ENCODE measurements at regions of chr12 and their contacts with region 1.

Region 1: DNA sequence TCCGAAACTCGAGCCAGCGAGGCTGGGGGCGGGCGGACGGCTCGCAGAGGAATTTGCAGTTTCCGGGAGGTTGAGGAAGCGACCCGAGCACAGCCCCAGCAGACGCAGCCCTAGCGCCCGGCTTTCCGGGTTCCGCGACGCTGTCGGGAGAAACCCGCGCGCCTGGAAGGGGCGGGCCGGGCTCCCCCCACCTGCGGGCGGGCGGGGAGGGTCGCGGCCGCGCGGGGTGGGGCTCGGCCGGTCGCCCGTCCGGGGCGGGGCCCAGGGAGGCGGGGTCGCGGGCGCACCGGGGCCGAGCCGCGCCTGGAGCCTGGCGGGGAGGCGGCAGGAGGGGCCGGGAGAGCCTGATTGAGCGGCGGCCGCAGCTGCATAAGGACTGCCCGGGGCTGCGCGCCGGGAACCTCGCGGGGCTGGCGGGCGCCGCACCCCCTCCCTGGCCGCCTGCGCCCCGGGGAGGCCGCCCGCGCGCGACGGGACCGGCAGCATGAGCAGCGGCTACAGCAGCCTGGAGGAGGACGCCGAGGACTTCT is at the start of gene RASSF3:
- DNase-seq: peak; percentile 94
- H3K4me3 Mint-ChIP-seq: peak within 1 kb of the TSS; percentile 96
- H3K27ac Mint-ChIP-seq: peak within 1 kb of the TSS; percentile 93
- H3K4me1 Mint-ChIP-seq: peaks cover 36% of the 10 kb centered on the region
- H3K27me3 Mint-ChIP-seq: no peaks in the 10 kb centered on the region
- total RNA-seq, gene RASSF3: 40.8 and 43.1 TPM in 2 replicates

Region 2: DNA sequence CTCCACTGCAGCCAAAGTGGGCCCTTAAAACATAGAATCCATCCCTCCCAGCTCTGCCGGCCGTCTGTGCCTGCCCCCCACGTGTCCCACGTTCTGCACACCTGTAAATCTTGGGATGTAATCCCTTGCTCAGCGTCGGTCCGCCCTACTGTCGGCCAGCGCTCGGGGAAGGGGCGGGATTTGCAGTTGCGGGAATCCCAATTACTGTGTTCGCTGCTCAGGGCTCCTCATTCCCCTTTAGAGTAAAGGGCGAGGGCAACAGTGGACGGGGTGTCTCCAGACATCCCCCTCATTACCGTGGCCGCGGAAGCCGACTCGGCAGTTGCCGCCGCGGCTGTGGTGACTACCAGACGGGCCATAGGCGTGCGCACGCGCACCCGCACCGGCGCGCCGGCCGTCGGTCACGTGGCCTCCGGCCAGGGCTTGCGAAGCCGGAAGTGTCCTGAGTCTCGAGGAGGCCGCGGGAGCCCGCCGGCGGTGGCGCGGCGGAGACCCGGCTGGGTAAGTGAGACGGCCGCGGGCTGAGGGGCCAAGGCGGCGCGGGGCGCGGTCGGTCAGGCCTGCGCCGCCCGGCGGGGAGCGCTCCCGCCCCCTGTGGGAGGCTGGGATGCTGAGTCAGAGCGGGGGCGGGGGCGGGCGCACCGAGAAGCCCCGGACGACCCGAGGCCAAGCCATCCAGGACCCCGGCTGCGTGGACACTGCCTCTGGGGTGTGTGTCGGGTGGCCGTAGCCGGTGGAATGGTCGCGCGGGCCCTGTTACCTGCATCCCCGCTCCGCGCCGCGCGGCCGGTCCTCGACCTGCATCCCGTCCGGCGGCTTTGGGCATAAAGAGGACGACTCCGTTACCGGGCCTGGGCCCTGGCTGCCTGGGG is 158.3 kb before region 1 on chr12 and contains the start of gene TBK1:
- intact Hi-C with region 1: loop called (anchors 2 kb)
- DNase-seq: peak; percentile 93
- H3K4me3 Mint-ChIP-seq: peak within 1 kb of the TSS; percentile 98
- H3K27ac Mint-ChIP-seq: peak within 1 kb of the TSS; percentile 98
- H3K4me1 Mint-ChIP-seq: peaks cover 36% of the 10 kb centered on the region
- H3K27me3 Mint-ChIP-seq: no peaks in the 10 kb centered on the region
- total RNA-seq, gene TBK1: 32.9 and 34.6 TPM in 2 replicates

Region 3: DNA sequence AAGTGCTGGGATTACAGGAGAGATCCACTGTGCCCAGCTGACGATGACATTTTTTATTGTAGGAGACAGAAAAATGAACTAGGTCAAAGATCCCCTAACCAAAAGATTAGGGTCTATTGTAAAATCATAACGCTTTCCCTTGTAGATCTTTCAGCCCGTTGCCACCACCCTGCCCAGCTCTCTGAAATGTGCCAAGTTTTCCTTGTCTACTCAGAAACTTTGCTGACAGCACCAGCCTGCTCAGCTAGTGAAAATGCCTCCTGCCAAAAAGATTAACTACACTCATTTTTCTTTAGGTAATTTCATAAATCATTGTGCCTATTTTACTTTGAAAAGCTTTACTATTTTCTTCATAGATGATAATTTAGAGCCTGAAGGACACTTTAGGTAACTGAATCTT is 28.1 kb before region 1 on chr12:
- intact Hi-C with region 1: no loop called
- DNase-seq: no peak
- H3K4me3 Mint-ChIP-seq: no peak overlapping the region
- H3K27ac Mint-ChIP-seq: no peak overlapping the region
- H3K4me1 Mint-ChIP-seq: peaks cover 11% of the 10 kb centered on the region
- H3K27me3 Mint-ChIP-seq: peaks cover 6% of the 10 kb centered on the region

Region 4: DNA sequence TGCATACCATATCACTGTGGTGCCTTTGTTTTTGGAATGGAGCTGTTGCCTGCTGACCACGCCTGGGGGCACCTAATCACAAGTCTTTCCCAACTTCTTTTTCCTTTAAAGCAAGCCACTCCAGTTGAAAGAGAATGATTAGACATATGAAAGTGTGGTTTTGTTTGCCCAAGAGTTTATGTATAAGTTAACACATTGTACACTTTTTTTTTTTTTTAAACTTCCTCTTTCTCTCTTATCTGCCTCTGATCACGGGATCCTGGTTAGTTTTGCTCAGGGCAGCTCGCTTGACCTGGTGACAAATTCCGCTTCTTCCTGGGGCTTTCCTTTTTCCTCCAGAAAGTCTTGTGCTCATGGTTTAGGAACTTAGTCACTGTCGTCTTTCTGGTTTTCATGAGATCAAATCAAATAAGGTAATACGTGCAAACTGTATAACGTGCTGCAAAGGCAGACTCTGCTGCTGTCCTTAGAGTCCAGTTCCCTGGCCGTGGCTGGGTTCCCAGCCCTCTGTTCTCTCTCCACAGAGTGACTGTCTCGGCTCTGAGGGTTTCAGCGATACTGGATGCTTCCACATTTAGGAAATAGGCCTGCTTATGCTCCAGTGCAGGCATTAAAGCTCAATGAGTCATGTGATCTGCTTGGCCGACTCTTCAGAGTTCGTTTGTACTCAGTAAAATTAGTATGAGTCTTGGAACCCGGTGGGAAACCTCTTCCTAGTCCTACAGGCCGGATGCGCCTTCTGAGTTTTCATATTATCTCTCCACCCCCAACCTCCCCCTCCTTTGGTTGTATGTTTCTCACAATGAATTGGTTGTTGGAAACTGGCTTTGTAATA is 15.2 kb after region 1 on chr12:
- intact Hi-C with region 1: loop called (anchors 1 kb)
- DNase-seq: peak; percentile 60
- H3K4me3 Mint-ChIP-seq: peak overlapping the region; percentile 71
- H3K27ac Mint-ChIP-seq: peak overlapping the region; percentile 77
- H3K4me1 Mint-ChIP-seq: peaks cover 37% of the 10 kb centered on the region
- H3K27me3 Mint-ChIP-seq: no peaks in the 10 kb centered on the region

Region 5: DNA sequence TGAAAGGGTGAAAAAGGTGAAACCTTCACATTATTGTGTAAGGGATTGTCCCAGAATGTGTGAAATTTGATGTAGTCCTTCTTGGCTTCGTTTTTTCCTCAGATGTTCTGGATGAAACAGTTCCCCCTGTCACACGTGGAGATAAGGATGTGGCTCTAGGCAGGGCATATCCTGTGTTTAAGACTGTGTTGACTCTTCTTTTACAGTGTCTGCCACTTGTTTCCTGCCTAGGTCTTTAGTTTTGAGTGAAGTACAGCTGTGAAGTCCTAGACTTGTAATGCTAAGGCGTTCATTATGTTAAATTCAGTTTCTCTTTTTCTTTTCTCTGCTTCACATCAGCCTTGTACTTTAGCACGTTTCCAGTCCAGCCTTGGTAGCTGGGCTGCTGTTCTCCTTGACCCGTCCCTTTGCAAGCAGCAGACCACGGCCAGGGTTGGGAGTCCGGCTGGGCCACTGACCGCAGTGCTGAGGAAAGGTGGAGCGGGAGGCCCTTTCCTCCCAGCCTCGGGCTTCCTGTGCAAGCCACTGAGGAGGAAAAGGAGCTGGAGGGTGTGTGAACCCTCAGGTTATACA is 59.1 kb after region 1 on chr12:
- intact Hi-C with region 1: loop called (anchors 1 kb)
- DNase-seq: peak; percentile 88
- H3K4me3 Mint-ChIP-seq: peak overlapping the region; percentile 83
- H3K27ac Mint-ChIP-seq: peak overlapping the region; percentile 91
- H3K4me1 Mint-ChIP-seq: peaks cover 82% of the 10 kb centered on the region
- H3K27me3 Mint-ChIP-seq: no peaks in the 10 kb centered on the region

Region 6: DNA sequence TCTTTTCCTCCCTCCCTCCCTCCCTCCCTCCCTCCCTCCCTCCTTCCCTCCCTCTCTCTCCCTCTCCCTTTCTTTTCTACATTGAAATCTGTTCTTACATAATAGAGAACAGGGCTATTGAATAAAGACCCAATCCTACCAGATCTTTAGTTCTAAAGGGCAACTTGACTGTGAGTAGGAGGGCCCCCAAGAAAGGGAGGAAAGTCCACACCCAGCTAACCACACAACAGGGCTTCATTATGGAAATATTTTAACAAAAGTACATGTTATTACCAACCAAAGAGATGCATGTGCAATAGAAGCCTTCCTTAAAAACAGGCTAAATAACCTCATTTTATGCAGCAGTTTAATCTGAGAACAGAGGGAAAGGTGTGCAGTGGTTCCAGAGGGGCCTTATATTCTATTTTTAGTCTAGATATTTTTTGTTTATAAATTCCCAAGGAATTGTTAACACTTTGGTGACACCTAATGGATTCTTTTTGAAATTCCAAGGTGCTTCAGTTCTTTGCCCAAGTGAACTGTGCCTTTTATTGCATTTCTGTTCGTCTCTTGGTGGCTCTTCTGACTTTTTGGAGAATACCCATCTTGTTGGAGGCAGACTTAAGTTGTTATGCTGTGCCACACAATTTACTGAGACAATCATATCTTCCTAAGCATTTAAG is 86.0 kb after region 1 on chr12:
- intact Hi-C with region 1: loop called (anchors 1 kb)
- DNase-seq: no peak
- H3K4me3 Mint-ChIP-seq: no peak overlapping the region
- H3K27ac Mint-ChIP-seq: no peak overlapping the region
- H3K4me1 Mint-ChIP-seq: peaks cover 58% of the 10 kb centered on the region
- H3K27me3 Mint-ChIP-seq: no peaks in the 10 kb centered on the region

Region 7: GRCh38 chr12:64706306-64706705 is 96.1 kb after region 1 on chr12:
- intact Hi-C with region 1: no loop called
- DNase-seq: no peak
- H3K4me3 Mint-ChIP-seq: no peak overlapping the region
- H3K27ac Mint-ChIP-seq: no peak overlapping the region
- H3K4me1 Mint-ChIP-seq: peaks cover 4% of the 10 kb centered on the region
- H3K27me3 Mint-ChIP-seq: no peaks in the 10 kb centered on the region

Region 8: GRCh38 chr12:65169320-65170208 is 559.4 kb after region 1 on chr12 and contains the start of gene LEMD3:
- intact Hi-C with region 1: loop called (anchors 5 kb)
- DNase-seq: peak; percentile 98
- H3K4me3 Mint-ChIP-seq: peak within 1 kb of the TSS; percentile 91
- H3K27ac Mint-ChIP-seq: peak within 1 kb of the TSS; percentile 99
- H3K4me1 Mint-ChIP-seq: peaks cover 28% of the 10 kb centered on the region
- H3K27me3 Mint-ChIP-seq: peaks cover 2% of the 10 kb centered on the region
- total RNA-seq, gene LEMD3: 28.9 and 30.0 TPM in 2 replicates

Measured in activated CD4-positive, alpha-beta T cell treated with anti-CD3 and anti-CD28 coated beads, Interleukin-2, amount 10 ng/mL, durations not matched to agents 24 days and 14 days (primary cell).